PC-3 (cell line): ENCODE measurements at regions of chr4 and their contacts with region 1.

Region 1: GRCh38 chr4:39134683-39135319 is 47.5 kb upstream of the WDR19 start:
- DNase-seq: peak; percentile 7
- ATAC-seq: peak; percentile 61
- H3K4me3 ChIP-seq: peak overlapping the region; percentile 50; the same call in 1 of the 2 replicates
- H3K27ac ChIP-seq: 0 out of 2 replicates have a peak overlapping the region, but pooled peaks have one; percentile 2
- H3K4me1 ChIP-seq: peaks cover 7% of the 10 kb centered on the region
- H3K27me3 ChIP-seq: no peaks in the 10 kb centered on the region
- CTCF ChIP-seq: no peak

Region 2: DNA sequence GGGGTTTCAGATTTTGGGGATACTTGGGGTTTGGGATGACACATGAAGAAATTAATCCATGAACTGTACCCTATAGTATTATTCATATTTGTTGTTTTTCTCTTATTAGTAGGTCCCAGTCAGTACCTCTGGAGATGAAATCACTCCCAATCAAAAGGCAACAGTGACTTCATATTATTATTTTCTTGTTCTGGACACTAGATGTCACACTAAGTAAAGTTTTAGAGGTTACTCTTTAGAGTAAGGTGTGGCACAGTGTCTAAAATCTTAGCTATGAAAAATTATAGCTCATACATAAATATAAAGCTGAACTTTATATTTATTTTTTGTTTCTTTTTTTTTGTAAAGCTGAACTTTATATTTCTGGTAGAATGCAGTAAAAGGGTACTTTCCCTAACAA is 232.1 kb before region 1 on chr4:
- CTCF ChIA-PET with region 1: interaction called, 18 read pairs
- POLR2A ChIA-PET with region 1: no interaction called
- intact Hi-C with region 1: loop called (anchors 1 kb)
- DNase-seq: peak; percentile 56
- ATAC-seq: peak; percentile 90
- H3K4me3 ChIP-seq: no peak overlapping the region
- H3K27ac ChIP-seq: no peak overlapping the region
- H3K4me1 ChIP-seq: no peaks in the 10 kb centered on the region
- H3K27me3 ChIP-seq: no peaks in the 10 kb centered on the region
- CTCF ChIP-seq: peak; percentile 60

Region 3: DNA sequence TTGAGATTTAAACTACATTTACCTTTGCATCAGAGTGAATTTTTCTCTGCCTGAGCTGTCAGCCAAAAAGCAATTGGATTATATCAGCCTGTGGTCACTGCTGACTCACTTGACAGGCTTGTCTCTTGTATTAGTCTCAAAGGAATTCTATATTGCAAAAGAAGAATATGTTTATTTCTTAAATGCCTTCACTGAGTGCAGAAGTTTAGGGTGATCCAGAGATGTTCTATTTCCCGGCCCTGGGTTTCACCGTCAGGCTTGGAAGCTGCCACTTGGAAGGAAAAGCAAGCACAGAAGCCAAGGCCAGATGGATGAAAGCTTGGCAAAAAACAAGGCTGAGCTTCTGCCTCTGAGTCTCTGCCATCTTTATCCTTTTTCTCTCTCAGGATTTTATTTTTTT is 186.2 kb before region 1 on chr4:
- CTCF ChIA-PET with region 1: no interaction called
- POLR2A ChIA-PET with region 1: interaction called, 4 read pairs
- intact Hi-C with region 1: loop called (anchors 1 kb)
- DNase-seq: peak; percentile 77
- ATAC-seq: peak; percentile 86
- H3K4me3 ChIP-seq: no peak overlapping the region
- H3K27ac ChIP-seq: peak overlapping the region; percentile 54
- H3K4me1 ChIP-seq: peaks cover 21% of the 10 kb centered on the region
- H3K27me3 ChIP-seq: no peaks in the 10 kb centered on the region
- CTCF ChIP-seq: no peak

Region 4: DNA sequence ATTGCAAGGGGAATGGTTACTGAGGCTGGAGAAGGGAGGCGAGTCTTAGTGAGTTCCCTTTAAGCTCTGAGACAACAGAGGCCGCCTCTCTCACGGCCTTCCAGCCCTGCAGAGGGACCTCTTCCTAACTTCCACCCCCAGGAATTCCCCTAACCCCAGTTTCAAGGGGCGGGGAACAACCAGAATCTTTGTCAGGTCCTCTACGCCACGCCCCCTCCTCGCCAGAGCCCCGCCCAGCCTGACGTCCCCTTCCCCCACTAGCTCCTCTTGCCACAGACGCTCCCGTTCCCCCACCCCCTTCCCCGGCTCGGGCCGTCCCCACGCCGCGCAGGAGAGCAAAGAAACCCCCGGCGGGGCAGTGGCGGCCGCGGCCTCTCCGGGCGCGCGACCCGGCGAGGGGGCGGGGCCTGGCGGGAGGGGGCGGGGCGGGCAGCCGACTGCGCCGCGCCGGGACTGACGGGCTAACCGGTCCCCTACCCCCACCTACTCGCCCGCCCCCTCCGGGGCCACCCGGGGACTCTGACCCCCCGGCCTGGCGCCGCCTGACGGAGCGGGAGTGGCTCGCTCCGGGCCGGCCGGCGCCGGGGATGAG is 90.3 kb before region 1 on chr4:
- CTCF ChIA-PET with region 1: interaction called, 5 read pairs
- POLR2A ChIA-PET with region 1: no interaction called
- intact Hi-C with region 1: loop called (anchors 2 kb)
- DNase-seq: peak; percentile 84
- ATAC-seq: peak; percentile 64
- H3K4me3 ChIP-seq: peak overlapping the region; percentile 88
- H3K27ac ChIP-seq: peak overlapping the region; percentile 95
- H3K4me1 ChIP-seq: peaks cover 48% of the 10 kb centered on the region
- H3K27me3 ChIP-seq: no peaks in the 10 kb centered on the region
- CTCF ChIP-seq: no peak

Region 5: DNA sequence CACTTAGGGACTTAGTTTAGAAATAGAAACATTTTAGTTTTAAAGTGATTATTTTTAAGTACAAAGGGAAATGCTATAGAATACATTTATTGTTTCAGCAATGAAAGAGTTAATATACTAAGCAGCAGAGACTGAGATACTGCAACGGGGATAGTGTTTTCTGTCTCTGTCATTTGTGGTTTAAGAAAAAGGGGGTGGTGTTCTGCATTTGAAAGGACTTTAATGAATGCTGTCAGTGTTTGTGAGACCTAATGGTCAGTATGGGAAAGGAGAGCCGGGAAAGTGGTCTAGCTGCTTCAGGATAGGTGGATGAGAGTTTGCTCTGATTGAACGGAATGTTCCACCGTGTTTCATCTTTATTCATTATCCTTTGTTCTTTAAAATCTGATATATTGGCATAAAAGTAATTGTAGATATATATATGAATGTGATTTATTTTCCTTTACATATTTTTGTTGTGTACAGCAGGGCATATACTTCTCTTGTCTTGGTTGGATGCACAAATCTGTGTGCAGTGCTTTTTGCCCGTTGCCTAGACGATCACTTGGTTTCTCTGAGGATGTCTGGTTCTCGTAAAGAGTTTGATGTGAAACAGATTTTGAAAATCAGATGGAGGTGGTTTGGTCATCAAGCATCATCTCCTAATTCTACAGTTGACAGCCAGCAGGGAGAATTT is 72.6 kb before region 1 on chr4 and contains the start of gene KLHL5:
- CTCF ChIA-PET with region 1: no interaction called
- POLR2A ChIA-PET with region 1: no interaction called
- intact Hi-C with region 1: no loop called
- DNase-seq: no peak
- ATAC-seq: no peak
- H3K4me3 ChIP-seq: no peak within 1 kb of the TSS
- H3K27ac ChIP-seq: no peak within 1 kb of the TSS
- H3K4me1 ChIP-seq: no peaks in the 10 kb centered on the region
- H3K27me3 ChIP-seq: no peaks in the 10 kb centered on the region
- CTCF ChIP-seq: no peak
- total RNA-seq, gene KLHL5: 84.8 and 92.7 TPM in 2 replicates

Region 6: DNA sequence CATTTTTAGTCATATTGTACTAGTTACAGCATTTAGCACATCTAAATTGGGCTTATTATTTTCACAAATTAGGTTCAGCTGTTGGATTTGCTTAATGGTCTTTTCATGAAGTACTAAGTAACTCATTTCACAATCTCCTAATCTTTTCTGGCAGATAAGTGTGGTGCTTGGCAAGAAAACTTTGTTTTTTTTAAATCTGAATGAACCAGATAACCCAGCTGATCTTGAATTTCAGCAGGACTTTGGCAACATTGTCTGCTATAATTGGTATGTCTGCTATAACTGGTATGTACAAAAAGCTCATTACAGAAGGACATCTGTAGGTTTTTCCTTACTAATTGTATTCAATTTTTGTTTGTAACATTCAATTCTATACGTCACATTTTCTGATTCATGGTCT is 70.2 kb after region 1 on chr4:
- CTCF ChIA-PET with region 1: no interaction called
- POLR2A ChIA-PET with region 1: no interaction called
- intact Hi-C with region 1: no loop called
- DNase-seq: no peak
- ATAC-seq: no peak
- H3K4me3 ChIP-seq: no peak overlapping the region
- H3K27ac ChIP-seq: no peak overlapping the region
- H3K4me1 ChIP-seq: no peaks in the 10 kb centered on the region
- H3K27me3 ChIP-seq: no peaks in the 10 kb centered on the region
- CTCF ChIP-seq: no peak

Region 7: GRCh38 chr4:39259571-39260330 is 125.0 kb after region 1 on chr4:
- CTCF ChIA-PET with region 1: no interaction called
- POLR2A ChIA-PET with region 1: no interaction called
- intact Hi-C with region 1: no loop called
- DNase-seq: peak; percentile 11
- ATAC-seq: peak; percentile 55
- H3K4me3 ChIP-seq: no peak overlapping the region
- H3K27ac ChIP-seq: 0 out of 2 replicates have a peak overlapping the region, but pooled peaks have one; percentile 16
- H3K4me1 ChIP-seq: peaks cover 21% of the 10 kb centered on the region
- H3K27me3 ChIP-seq: no peaks in the 10 kb centered on the region
- CTCF ChIP-seq: no peak

Region 8: GRCh38 chr4:39446751-39447573 is 312.2 kb after region 1 on chr4:
- CTCF ChIA-PET with region 1: no interaction called
- POLR2A ChIA-PET with region 1: no interaction called
- intact Hi-C with region 1: no loop called
- DNase-seq: peak; percentile 18
- ATAC-seq: peak; percentile 60
- H3K4me3 ChIP-seq: no peak overlapping the region
- H3K27ac ChIP-seq: no peak overlapping the region
- H3K4me1 ChIP-seq: no peaks in the 10 kb centered on the region
- H3K27me3 ChIP-seq: no peaks in the 10 kb centered on the region
- CTCF ChIP-seq: no peak